KBM-7 (cell line): ENCODE measurements at regions of chr16 and their contacts with region 1.

Region 1: GRCh38 chr16:48623304-48624016 is 13.5 kb upstream of the N4BP1 start:
- DNase-seq: peak; percentile 91

Region 2: GRCh38 chr16:48385272-48386150 is 237.9 kb before region 1 on chr16 and contains the start of gene SIAH1:
- in situ Hi-C with region 1: loop called (anchors 25 kb)
- DNase-seq: peak; percentile 73